Dorsolateral prefrontal cortex (tissue), 120 donors: ENCODE measurements at regions of chr10 and their contacts with region 1.

Region 1: DNA sequence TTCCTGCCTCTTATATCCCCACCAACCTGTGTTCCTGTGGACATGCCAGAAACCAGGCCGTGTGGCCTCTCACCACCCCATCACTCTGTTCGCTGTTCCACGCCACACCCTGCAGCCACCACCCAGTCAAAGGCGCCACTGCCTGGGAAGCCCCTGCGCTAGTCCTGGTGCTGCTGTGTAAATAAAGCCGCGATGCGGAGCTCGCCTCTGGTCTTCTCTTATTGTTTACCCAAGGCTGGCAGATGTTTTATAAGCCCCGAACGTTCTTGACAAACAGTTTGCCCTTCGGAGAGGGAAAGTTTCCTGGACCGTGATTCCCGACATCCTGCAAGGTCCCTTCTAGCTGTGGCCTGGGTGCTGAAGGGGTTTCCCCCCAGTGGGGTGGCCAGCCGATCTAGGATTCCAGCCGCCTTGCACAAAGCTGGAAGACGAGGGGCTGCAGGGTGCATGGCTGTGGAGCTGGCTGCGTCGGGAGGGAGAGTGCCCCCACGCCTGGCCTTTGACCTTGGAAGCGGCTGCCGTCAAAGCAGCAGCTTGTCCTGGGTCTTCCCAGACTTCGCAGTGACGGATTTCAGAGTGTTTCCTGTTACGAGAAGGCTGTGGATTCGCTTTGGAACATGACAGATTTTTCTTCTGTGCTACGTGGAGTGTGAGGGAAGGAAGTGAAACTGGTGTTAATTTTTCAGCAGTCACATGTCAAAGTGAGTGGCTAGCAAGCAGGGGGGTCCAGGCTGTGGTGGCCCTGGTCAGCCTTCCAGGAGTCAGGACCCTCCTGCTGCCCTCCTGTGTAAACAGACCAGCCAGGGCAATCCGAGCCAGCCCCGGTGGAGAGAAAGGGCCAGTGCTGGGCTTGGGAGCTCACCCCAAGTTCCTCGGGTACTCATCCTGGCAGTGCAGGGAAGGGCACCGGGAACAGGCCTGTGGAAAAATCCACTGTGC is 61.6 kb downstream of the LHPP start:
- DNase-seq: peak in 1 of 10 donors; percentile 29
- H3K4me3 ChIP-seq: peak overlapping the region in 9 of 59 donors; percentile 3 to 36 (median 33)
- H3K27ac ChIP-seq: peak overlapping the region in 53 of 59 donors; percentile 5 to 85 (median 70)
- H3K27me3 ChIP-seq: no peaks in the 10 kb centered on the region
- CTCF ChIP-seq: no peak

Region 2: DNA sequence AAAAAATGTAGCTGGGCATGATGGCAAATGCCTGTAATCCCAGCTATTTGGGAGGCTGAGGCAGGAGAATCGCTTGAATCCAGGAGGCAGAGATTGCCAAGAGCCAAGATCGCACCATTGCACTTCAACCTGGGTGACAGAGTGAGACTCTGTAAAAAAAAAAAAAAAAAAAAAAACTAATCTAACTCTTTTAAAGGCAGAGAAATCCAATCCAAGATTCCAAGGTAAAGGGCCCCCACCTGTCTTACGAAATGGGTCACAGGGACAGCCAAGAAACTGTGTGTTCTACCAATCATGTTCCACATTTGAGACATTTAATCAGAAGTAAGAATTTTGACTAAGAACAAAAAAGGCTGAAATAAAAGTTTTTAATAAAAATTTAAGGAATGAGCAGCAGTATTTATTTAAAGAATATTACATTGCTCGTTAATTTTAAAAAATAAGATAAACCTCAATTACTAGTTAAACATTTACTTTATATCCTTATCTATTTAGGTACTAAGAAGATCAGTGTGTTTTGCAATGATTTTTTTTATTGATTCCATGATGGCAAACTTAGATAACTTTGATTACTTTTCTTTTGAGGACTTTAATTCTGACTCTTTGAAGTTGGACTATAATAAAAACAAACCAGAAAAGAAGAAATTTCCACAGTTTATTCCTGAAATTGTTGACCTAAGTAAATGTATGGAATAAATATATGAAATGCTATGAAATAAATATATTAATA is 97.8 kb before region 1 on chr10:
- intact Hi-C with region 1: no loop called
- DNase-seq: no peak
- H3K4me3 ChIP-seq: no peak overlapping the region
- H3K27ac ChIP-seq: no peak overlapping the region
- H3K27me3 ChIP-seq: peaks cover 0 to 7% (median 0%) of the 10 kb centered on the region in 45 donors
- CTCF ChIP-seq: no peak

Region 3: GRCh38 chr10:124992462-124993344 is 469.5 kb after region 1 on chr10:
- intact Hi-C with region 1: loop called in 1 of 2 experiments (anchors 10 kb)
- DNase-seq: peak in 6 of 10 donors; percentile 63 to 81 (median 72)
- H3K4me3 ChIP-seq: no peak overlapping the region
- H3K27ac ChIP-seq: peak overlapping the region in 55 of 59 donors; percentile 1 to 95 (median 79)
- H3K27me3 ChIP-seq: no peaks in the 10 kb centered on the region
- CTCF ChIP-seq: peak; percentile 59 to 91 (median 83)